ENCODE measurements at regions of chr22 and their contacts with region 1.

Region 1: DNA sequence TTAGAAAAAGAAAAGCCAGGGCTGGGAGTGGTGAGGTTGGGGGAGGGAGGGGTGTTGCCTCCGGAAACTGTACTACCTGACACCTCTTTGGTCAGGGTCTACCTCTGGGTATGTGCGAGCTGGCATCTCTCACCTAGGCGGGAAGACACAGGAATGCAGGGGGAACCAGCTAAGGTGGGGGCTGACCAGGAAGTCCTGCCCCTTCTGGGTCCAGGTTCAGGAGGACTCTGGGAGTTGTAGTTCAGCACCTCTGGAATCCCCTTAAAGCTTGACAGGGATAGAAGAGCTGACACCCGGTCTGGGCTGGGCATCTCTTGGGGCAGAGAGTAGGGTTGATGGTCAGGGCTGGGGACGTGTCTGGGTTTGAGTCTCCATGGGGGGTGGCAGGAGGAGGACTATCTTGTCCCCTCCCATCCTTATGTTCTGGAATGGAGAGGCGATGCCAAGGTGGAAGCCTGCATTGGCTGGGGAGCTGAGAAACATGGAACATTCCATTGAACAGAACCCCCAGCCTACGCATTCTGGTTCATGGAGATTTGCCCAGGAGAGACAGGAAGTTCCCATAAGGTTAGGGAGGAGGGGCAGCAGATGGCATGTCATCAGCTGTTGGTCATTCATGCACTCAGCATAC is 2.1 kb upstream of the KIAA1671 start:
- DNase-seq: peak in 1 of 2 donors; percentile 80
- H3K4me3 ChIP-seq: peak overlapping the region in 1 of 3 donors; percentile 16
- H3K27ac ChIP-seq: peak overlapping the region; percentile 43 to 46
- H3K4me1 ChIP-seq: peaks cover 0 to 3% of the 10 kb centered on the region in 2 donors
- H3K27me3 ChIP-seq: peaks cover 0 to 2% of the 10 kb centered on the region in 2 donors
- CTCF ChIP-seq: no peak
- POLR2A ChIP-seq: no peak

Region 2: DNA sequence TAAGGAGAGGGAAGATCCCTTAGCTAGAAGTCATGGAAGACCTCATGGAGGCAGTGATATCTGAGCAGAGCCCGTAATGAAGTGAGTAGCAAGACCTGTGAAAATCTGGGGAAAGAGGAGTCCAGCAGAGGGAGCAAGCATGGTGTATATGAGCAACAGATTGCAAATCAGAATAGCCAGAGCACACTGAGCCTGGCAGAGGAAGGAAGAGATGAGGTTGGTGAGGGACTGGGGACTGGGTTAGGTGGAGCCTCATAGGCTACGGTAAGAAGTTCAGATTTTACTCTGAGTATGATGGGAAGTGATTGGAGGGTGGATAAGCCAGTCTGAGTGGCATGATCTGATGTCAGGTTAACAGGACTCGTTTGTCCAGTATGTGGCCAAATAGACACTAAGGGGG is 13.2 kb before region 1 on chr22:
- intact Hi-C with region 1: no loop called
- DNase-seq: no peak
- H3K4me3 ChIP-seq: no peak overlapping the region
- H3K27ac ChIP-seq: no peak overlapping the region
- H3K4me1 ChIP-seq: no peaks in the 10 kb centered on the region
- H3K27me3 ChIP-seq: no peaks in the 10 kb centered on the region
- CTCF ChIP-seq: no peak
- POLR2A ChIP-seq: no peak

Region 3: DNA sequence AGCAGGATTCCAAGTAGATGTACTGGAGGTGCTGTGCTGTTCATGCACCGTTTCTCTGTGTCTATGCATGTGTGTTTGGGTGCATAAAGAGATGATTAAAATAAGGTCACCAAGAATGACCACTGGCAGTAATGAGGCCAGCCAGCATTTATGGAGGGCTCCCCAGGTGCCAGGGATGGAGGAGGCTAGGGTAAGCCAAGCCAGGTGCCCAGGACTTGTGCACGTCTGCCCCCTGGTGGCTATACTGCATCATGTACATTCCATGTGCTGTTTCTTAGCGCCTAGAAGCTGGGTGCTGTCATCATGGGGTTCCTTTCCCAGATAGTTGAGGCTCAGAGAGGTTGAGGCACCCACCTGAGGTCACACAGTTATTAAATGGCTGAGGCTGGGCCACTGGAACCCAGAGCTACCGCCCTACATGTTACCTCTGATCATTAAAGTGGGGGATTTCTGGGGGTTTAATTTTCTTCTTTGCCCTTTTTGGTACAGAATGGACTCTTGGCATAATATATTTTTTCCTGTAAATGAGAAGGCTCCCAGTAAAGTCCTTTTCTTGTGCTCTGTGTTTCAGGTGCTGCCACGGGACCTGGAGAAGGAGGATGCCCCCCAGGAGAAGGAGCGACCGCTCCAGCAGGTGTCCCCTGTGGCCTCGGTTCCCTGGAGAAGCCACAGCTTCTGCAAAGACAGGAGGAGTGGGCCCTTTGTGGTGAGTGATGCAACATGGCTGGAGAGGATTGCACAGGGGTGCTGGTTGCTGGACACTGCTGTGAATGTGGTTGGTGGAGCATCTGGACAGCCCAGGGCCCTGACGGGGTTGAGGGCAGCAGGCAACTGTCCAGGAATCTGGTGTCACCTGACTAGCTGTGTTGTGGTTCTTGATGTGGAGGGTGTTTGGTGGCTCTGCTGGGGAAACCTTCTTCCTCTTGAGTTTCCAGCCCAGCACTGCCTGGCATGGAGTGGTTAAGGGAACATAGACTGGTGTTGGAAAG is 98.6 kb after region 1 on chr22:
- intact Hi-C with region 1: loop called (anchors 1 kb)
- DNase-seq: peak; percentile 31 to 72
- H3K4me3 ChIP-seq: no peak overlapping the region
- H3K27ac ChIP-seq: no peak overlapping the region
- H3K4me1 ChIP-seq: no peaks in the 10 kb centered on the region
- H3K27me3 ChIP-seq: no peaks in the 10 kb centered on the region
- CTCF ChIP-seq: peak; percentile 83 to 89 (median 88)
- POLR2A ChIP-seq: no peak

Measured in breast epithelium (tissue), 4 donors.